PC-3 (cell line): ENCODE measurements at regions of chr14 and their contacts with region 1.

Region 1: DNA sequence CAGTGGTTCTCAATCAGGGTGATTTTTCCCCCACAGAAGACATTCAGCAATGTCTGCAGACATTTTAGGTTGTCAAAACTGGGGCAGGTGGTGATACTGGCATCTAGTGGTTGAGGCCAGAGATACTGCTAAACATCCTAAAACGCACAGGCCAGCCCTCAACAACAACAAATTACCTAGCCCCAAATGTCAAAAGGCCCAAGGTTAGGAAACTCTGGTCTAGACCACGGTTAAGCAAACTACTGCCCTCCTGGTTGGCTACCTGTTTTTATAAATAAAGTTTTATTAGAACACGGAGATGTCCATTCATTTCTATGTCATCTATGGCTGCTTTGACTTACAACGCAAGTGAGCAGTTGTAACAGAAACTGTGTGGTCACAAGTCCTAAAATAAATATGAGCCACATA is 186.7 kb downstream of the EFCAB11 start:
- DNase-seq: peak; percentile 67
- ATAC-seq: peak; percentile 68
- H3K4me3 ChIP-seq: no peak overlapping the region
- H3K27ac ChIP-seq: no peak overlapping the region
- H3K4me1 ChIP-seq: peaks cover 5% of the 10 kb centered on the region; the same call in 1 of the 2 replicates
- H3K27me3 ChIP-seq: no peaks in the 10 kb centered on the region
- CTCF ChIP-seq: peak; percentile 79

Region 2: DNA sequence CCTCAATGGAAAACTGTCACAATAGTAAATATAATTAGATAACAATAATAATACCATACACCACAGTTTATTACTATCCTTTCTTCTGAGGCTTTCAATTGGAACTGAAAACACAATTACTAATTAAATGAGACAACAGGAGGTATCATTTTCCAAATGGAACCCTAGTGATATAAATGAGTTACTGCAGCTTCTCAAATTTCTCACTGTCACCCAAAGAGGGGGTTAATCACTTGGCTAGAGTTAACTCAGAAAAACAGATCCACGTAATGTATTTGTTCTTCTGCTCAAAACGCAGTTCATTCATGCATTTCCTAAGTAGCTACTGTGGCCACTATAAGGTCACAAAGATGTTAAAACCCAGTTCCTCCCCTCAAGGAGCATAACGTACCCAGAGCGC is 230.0 kb before region 1 on chr14:
- CTCF ChIA-PET with region 1: no interaction called
- POLR2A ChIA-PET with region 1: no interaction called
- intact Hi-C with region 1: no loop called
- DNase-seq: no peak
- ATAC-seq: no peak
- H3K4me3 ChIP-seq: no peak overlapping the region
- H3K27ac ChIP-seq: no peak overlapping the region
- H3K4me1 ChIP-seq: peaks cover 21% of the 10 kb centered on the region
- H3K27me3 ChIP-seq: no peaks in the 10 kb centered on the region
- CTCF ChIP-seq: no peak

Region 3: GRCh38 chr14:89618811-89619551 is 148.9 kb before region 1 on chr14:
- CTCF ChIA-PET with region 1: no interaction called
- POLR2A ChIA-PET with region 1: no interaction called
- intact Hi-C with region 1: loop called (anchors 10 kb)
- DNase-seq: peak; percentile 58
- ATAC-seq: peak; percentile 83
- H3K4me3 ChIP-seq: peak overlapping the region; percentile 79
- H3K27ac ChIP-seq: no peak overlapping the region
- H3K4me1 ChIP-seq: 0 out of 2 replicates have a peak, but pooled peaks cover 4% of the 10 kb centered on the region
- H3K27me3 ChIP-seq: no peaks in the 10 kb centered on the region
- CTCF ChIP-seq: no peak

Region 4: DNA sequence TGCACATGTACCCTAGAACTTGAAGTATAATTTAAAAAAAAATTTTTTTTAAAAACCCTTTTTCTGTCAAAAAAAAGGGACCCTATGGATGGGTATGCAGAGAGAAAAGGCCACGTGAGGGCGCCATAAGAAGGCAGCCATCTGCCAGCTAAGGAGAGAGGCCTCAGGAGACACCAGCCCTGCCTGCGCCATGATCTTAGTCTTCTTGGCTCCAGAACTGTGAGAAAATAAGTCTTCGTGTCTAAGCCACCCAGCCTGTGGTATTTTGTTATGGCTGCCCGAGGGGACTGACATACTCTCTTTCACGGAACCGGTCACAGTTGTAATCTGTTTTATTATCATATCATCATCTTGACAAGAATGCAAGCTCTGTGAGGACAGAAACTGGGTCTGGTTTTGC is 11.8 kb after region 1 on chr14:
- CTCF ChIA-PET with region 1: no interaction called
- POLR2A ChIA-PET with region 1: no interaction called
- intact Hi-C with region 1: no loop called
- DNase-seq: no peak
- ATAC-seq: no peak
- H3K4me3 ChIP-seq: no peak overlapping the region
- H3K27ac ChIP-seq: no peak overlapping the region
- H3K4me1 ChIP-seq: no peaks in the 10 kb centered on the region
- H3K27me3 ChIP-seq: no peaks in the 10 kb centered on the region
- CTCF ChIP-seq: no peak; the same call in 1 of the 2 replicates